Naive thymus-derived CD4-positive, alpha-beta T cell (primary cell): ENCODE measurements at regions of chr22 and their contacts with region 1.

Region 1: GRCh38 chr22:30183861-30184278 is 62.7 kb downstream of the LIF start:
- DNase-seq: no peak
- ATAC-seq: peak; percentile 67
- H3K4me3 ChIP-seq: no peak overlapping the region
- H3K4me3 Mint-ChIP-seq: peak overlapping the region in 1 of 10 donors; percentile 70
- H3K27ac ChIP-seq: no peak overlapping the region
- H3K27ac Mint-ChIP-seq: peak overlapping the region in 2 of 9 donors; percentile 16 to 94
- H3K4me1 ChIP-seq: peaks cover 0 to 6% of the 10 kb centered on the region in 2 donors
- H3K4me1 Mint-ChIP-seq: peaks cover 10 to 90% (median 16%) of the 10 kb centered on the region in 7 donors
- H3K27me3 ChIP-seq: no peaks in the 10 kb centered on the region
- H3K27me3 Mint-ChIP-seq: no peaks in the 10 kb centered on the region

Region 2: GRCh38 chr22:30169002-30169401 is 14.9 kb before region 1 on chr22:
- CTCF ChIA-PET with region 1: no interaction called
- POLR2A ChIA-PET with region 1: no interaction called
- intact Hi-C with region 1: loop called in 1 of 2 experiments (anchors 2 kb)
- DNase-seq: peak in 7 of 9 donors; percentile 28 to 72 (median 56)
- ATAC-seq: peak; percentile 65
- H3K4me3 ChIP-seq: no peak overlapping the region
- H3K4me3 Mint-ChIP-seq: no peak overlapping the region
- H3K27ac ChIP-seq: no peak overlapping the region
- H3K27ac Mint-ChIP-seq: no peak overlapping the region
- H3K4me1 ChIP-seq: peaks cover 0 to 28% of the 10 kb centered on the region in 2 donors
- H3K4me1 Mint-ChIP-seq: peaks cover 0 to 23% (median 0%) of the 10 kb centered on the region in 7 donors
- H3K27me3 ChIP-seq: no peaks in the 10 kb centered on the region
- H3K27me3 Mint-ChIP-seq: no peaks in the 10 kb centered on the region

Region 3: DNA sequence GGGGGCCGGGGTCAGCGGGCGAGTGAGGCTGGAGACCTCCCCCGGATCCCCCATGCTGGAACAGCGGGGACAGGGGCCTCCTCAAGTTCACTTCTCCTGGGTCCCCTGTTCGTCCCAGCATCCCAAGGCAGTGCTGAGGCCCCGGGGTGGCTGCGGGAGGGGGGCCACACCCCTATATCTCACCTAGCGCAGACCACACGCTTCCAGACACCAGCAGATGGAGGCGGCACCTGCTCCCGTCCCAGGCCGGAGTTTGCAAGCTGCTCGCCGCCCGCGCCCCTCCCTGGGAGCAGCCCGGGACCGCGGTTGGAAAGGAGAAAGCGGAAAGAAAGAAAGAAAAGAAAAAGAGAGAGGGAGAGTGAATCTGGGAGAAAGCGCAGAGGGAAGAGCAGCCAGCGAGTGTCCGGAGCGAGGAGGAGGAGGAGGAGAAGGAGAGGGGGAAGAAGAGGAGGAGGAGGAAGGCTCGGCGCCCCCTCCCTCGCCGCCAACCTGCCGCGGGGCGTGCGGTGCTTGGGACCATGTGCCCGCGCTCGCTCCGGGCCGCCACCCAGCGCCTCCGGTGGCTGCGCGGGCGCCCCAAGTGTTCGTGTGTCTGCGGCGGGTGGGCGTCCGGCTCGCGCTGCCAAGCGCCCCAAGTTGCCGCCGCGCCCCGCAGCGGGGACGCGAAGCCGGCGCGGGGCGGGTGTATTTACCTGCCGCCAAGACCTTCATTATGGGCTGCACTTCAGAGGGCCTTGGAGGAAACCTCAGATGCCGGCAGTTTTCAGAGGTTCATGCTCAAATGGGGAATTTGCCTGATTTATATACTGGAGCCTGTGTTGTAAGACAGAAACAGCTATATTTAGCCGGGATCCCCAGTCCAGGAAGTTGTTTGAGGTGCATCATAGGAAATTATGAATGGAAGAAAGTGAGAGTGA is 62.4 kb after region 1 on chr22 and contains the start of gene LIF:
- CTCF ChIA-PET with region 1: no interaction called
- POLR2A ChIA-PET with region 1: no interaction called
- intact Hi-C with region 1: loop called in 1 of 2 experiments (anchors 2 kb)
- DNase-seq: peak; percentile 30 to 77 (median 50)
- ATAC-seq: peak; percentile 85
- H3K4me3 ChIP-seq: peak within 1 kb of the TSS; percentile 58
- H3K4me3 Mint-ChIP-seq: peak within 1 kb of the TSS; percentile 77 to 97 (median 86)
- H3K27ac ChIP-seq: peak within 1 kb of the TSS; percentile 22
- H3K27ac Mint-ChIP-seq: peak within 1 kb of the TSS in 4 of 9 donors; percentile 30 to 99 (median 52)
- H3K4me1 ChIP-seq: peaks cover 0 to 18% of the 10 kb centered on the region in 2 donors
- H3K4me1 Mint-ChIP-seq: peaks cover 6 to 67% (median 26%) of the 10 kb centered on the region in 7 donors
- H3K27me3 ChIP-seq: no peaks in the 10 kb centered on the region
- H3K27me3 Mint-ChIP-seq: peaks cover 0 to 37% (median 6%) of the 10 kb centered on the region in 5 donors
- total RNA-seq, gene LIF: 0.64 to 260 (median 0.98) TPM in 3 of 5 experiments, not detected in the others